IMR-90 (cell line): ENCODE measurements at regions of chr2 and their contacts with region 1.

Region 1: GRCh38 chr2:96329416-96330269 is 4.5 kb downstream of the ITPRIPL1 start:
- DNase-seq: peak; percentile 48
- ATAC-seq: no peak
- H3K4me3 ChIP-seq: no peak overlapping the region
- H3K27ac ChIP-seq: peak overlapping the region; percentile 62; the same call in 1 of the 2 replicates
- H3K4me1 ChIP-seq: peaks cover 10% of the 10 kb centered on the region
- H3K27me3 ChIP-seq: peaks cover 17% of the 10 kb centered on the region
- CTCF ChIP-seq: no peak
- POLR2A ChIP-seq: no peak
- RAD21 ChIP-seq: no peak

Region 2: DNA sequence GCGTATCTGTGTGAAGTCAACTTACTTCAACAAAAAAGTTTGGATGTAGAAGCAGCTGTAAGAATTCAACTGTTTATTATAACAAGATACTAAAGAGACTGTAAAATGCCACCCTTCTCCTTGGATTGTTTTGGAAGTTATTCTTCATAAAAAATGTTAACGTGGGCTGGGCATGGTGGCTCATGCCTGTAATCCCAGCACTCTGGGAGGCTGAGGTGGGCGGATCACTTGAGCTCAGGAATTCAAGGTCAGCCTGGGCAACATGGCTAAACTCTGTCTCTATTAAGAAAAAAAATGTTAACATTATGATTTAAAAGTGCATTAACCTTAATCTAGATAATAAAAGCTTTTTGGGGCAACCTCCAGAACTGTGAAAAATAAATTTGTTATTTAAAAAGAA is 55.9 kb before region 1 on chr2:
- CTCF ChIA-PET with region 1: no interaction called
- POLR2A ChIA-PET with region 1: interaction called, 11 read pairs
- dilution Hi-C with region 1: no loop called
- in situ Hi-C with region 1: no loop called
- intact Hi-C with region 1: no loop called
- DNase-seq: peak; percentile 37
- ATAC-seq: peak; percentile 74
- H3K4me3 ChIP-seq: no peak overlapping the region
- H3K27ac ChIP-seq: no peak overlapping the region
- H3K4me1 ChIP-seq: peaks cover 3% of the 10 kb centered on the region; the same call in 1 of the 2 replicates
- H3K27me3 ChIP-seq: no peaks in the 10 kb centered on the region
- CTCF ChIP-seq: no peak
- POLR2A ChIP-seq: no peak
- RAD21 ChIP-seq: no peak

Region 3: GRCh38 chr2:96315400-96316071 is 14.1 kb before region 1 on chr2:
- CTCF ChIA-PET with region 1: no interaction called
- POLR2A ChIA-PET with region 1: no interaction called
- dilution Hi-C with region 1: no loop called
- in situ Hi-C with region 1: no loop called
- intact Hi-C with region 1: no loop called
- DNase-seq: peak; percentile 71
- ATAC-seq: peak; percentile 78
- H3K4me3 ChIP-seq: no peak overlapping the region
- H3K27ac ChIP-seq: peak overlapping the region; percentile 17
- H3K4me1 ChIP-seq: peaks cover 12% of the 10 kb centered on the region
- H3K27me3 ChIP-seq: no peaks in the 10 kb centered on the region
- CTCF ChIP-seq: no peak
- POLR2A ChIP-seq: no peak
- RAD21 ChIP-seq: no peak

Region 4: DNA sequence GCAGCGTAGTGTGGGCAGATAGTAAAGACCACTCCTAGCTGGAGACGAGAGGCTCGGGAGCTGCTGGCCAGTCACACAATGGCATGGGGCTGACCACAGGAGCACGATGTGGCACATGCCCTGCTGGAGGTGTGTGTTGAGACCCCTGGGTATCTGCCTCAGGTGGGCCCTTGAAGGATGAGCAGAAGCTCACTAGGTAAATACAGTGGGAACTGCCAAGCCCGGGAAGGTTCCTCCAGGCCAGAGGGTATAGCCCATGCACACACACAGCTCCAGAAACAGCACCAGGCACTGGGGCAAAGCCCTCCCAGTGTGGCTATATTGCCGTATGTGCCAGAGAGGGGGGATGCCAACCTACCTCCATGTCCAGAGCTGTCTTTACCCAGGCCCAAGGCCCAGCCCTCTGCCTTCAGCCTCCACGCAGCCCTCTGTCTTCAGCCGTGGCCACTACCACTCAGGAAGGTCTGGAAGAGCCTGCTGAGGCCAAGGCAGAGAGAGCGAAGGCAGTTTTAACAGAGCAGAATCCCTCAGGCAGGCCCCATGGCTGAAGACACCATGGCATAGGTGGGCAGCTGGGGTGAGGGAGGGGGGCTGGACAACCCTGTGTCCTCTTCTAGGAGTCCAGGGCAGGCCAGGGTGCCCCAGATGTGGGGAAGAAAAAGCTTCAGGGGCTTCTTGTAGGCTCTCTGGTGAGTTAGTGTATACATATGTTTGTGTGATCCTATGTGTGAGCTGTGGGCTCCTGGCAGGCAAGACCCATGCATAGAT is 199.9 kb after region 1 on chr2:
- CTCF ChIA-PET with region 1: no interaction called
- POLR2A ChIA-PET with region 1: interaction called, 12 read pairs
- dilution Hi-C with region 1: no loop called
- in situ Hi-C with region 1: no loop called
- intact Hi-C with region 1: no loop called
- DNase-seq: no peak
- ATAC-seq: no peak
- H3K4me3 ChIP-seq: no peak overlapping the region
- H3K27ac ChIP-seq: no peak overlapping the region
- H3K4me1 ChIP-seq: peaks cover 41% of the 10 kb centered on the region
- H3K27me3 ChIP-seq: peaks cover 11% of the 10 kb centered on the region
- CTCF ChIP-seq: no peak
- POLR2A ChIP-seq: no peak
- RAD21 ChIP-seq: no peak

Region 5: DNA sequence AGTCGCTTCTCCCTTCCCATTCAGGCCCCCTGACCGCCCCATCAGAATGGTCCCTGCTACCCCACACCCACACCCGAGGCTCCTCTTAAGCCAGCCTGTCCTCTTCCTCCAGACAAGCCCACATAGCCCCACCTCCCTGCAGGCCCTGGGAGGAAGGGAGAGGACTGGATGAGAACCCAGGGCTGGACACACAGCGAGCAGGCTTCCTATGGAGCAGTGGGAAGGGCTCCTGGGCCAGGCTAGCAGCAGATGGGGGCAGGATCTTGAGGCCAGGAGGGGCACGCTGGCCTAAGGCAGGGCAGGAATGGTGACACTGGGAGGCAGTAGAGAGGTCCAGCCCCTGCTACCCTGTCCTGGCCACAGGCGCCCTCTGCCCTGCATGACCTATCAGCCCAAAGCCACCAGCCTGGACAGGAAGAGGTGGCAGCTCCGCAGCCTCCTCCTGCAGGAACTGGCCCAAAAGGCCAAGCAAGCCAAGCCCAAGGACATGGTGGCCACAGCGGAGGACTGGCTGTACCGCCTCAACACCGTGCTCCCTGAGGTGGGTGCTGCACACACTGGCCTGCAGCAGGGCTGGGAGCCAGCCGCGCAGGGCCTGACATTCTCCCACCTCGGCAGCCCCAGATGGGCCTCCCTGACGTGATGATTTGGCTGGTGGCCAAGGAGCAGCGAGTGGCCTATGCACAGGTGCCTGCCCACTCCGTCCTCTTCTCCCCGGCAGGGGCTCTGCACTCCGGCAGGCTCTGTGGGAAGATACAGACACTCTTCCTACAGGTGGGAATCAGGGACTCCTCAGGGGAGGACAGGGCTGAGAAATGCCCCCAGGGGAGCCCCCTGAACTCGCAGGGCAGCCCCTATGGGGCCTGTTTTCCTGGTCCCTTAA is 356.2 kb after region 1 on chr2:
- CTCF ChIA-PET with region 1: no interaction called
- POLR2A ChIA-PET with region 1: no interaction called
- dilution Hi-C with region 1: no loop called
- in situ Hi-C with region 1: no loop called
- intact Hi-C with region 1: no loop called
- DNase-seq: no peak
- ATAC-seq: peak; percentile 81
- H3K4me3 ChIP-seq: no peak overlapping the region
- H3K27ac ChIP-seq: no peak overlapping the region
- H3K4me1 ChIP-seq: peaks cover 12% of the 10 kb centered on the region; the same call in 1 of the 2 replicates
- H3K27me3 ChIP-seq: peaks cover 13% of the 10 kb centered on the region; the same call in 1 of the 2 replicates
- CTCF ChIP-seq: no peak
- POLR2A ChIP-seq: no peak
- RAD21 ChIP-seq: no peak